ENCODE measurements at regions of chr14 and their contacts with region 1.

Region 1: GRCh38 chr14:54902521-54903420 is at the start of gene GCH1:
- DNase-seq: peak; percentile 81
- H3K4me3 Mint-ChIP-seq: peak within 1 kb of the TSS; percentile 85
- H3K27ac Mint-ChIP-seq: peak within 1 kb of the TSS; percentile 92
- H3K4me1 Mint-ChIP-seq: peaks cover 49% of the 10 kb centered on the region
- H3K27me3 Mint-ChIP-seq: no peaks in the 10 kb centered on the region
- total RNA-seq, gene GCH1: 68.7 to 70.3 TPM

Region 2: DNA sequence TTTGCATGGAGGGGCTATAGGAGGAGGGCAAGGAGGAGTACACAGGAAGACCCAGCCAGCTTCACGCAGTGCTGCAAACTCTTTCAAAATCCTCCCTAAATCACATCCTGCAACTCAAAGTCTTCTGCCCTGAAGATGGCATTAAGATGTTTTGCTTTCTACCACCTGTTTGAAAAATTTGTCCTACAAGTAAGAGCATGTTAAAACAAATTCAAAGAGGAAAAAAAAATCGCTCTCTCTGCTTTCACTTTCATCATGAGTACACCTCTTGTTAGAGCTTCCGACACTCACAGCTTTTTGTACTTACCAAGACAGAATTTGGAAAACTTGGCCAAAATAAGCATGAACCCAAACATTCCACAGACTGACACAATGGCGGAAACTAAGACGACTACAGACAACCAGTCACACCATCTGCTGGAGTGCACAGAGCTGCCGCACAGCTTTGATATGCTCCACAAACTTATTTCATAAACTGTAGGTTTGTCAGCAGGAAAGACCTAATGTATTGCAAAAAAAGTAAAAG is 21.5 kb before region 1 on chr14:
- CTCF ChIA-PET with region 1: interaction called, 21 read pairs
- POLR2A ChIA-PET with region 1: interaction called, 46 read pairs
- DNase-seq: peak; percentile 40
- H3K4me3 Mint-ChIP-seq: peak overlapping the region; percentile 76
- H3K27ac Mint-ChIP-seq: peak overlapping the region; percentile 96
- H3K4me1 Mint-ChIP-seq: peaks cover 44% of the 10 kb centered on the region
- H3K27me3 Mint-ChIP-seq: no peaks in the 10 kb centered on the region

Region 3: DNA sequence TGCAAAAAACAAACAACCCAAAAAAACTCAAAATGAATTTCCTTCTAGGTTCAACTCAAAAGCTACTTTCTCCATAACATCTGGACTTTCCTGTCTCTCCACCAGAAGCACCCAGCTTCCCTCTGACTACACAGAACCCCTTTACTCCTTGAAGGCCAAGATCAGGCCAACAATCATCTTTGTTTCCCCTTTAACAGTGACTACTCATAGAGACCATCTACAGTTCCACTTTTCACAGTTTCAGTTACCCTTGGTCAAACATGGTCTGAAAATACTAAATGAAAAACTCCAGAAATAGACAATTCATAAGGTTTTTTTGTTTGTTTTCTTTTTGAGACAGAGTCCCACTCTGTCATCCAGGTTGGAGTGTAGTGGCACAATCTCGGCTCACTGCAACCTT is 12.0 kb before region 1 on chr14:
- CTCF ChIA-PET with region 1: interaction called, 15 read pairs
- POLR2A ChIA-PET with region 1: interaction called, 7 read pairs
- DNase-seq: no peak
- H3K4me3 Mint-ChIP-seq: no peak overlapping the region
- H3K27ac Mint-ChIP-seq: no peak overlapping the region
- H3K4me1 Mint-ChIP-seq: peaks cover 53% of the 10 kb centered on the region
- H3K27me3 Mint-ChIP-seq: no peaks in the 10 kb centered on the region